Body of pancreas (tissue), 4 donors: ENCODE measurements at regions of chr17 and their contacts with region 1.

Region 1: GRCh38 chr17:4913994-4914393 is 11.1 kb upstream of the CHRNE start:
- DNase-seq: no peak
- ATAC-seq: peak; percentile 16
- H3K4me3 ChIP-seq: no peak overlapping the region
- H3K27ac ChIP-seq: peak overlapping the region in 2 of 4 donors; percentile 9 to 44
- H3K4me1 ChIP-seq: peaks cover 7% of the 10 kb centered on the region
- H3K27me3 ChIP-seq: no peaks in the 10 kb centered on the region
- CTCF ChIP-seq: peak in 1 of 7 experiments; percentile 4
- POLR2A ChIP-seq: no peak

Region 2: DNA sequence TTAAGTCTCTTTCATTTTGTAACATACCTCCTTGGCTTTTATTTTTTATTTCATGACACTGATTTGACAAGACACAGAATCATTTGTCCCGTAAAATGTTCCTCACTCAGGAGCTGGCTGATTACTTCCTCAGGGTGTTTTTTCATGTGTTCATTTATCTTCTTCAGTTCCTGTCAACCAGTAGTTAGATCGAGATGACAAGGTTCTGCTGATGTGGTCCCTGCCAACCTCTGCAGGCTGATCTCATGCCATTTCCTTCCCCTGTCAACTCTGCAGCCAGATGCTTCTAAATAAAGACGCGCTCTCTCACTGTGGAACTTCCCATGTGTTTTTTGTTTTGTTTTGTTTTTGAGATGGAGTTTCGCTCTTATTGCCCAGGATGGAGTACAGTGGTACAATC is 166.1 kb before region 1 on chr17:
- intact Hi-C with region 1: no loop called
- DNase-seq: peak in 1 of 4 donors; percentile 57
- ATAC-seq: no peak
- H3K4me3 ChIP-seq: no peak overlapping the region
- H3K27ac ChIP-seq: peak overlapping the region in 1 of 4 donors; percentile 16
- H3K4me1 ChIP-seq: peaks cover 6% of the 10 kb centered on the region
- H3K27me3 ChIP-seq: peaks cover 0 to 23% of the 10 kb centered on the region in 2 donors
- CTCF ChIP-seq: no peak
- POLR2A ChIP-seq: no peak

Region 3: DNA sequence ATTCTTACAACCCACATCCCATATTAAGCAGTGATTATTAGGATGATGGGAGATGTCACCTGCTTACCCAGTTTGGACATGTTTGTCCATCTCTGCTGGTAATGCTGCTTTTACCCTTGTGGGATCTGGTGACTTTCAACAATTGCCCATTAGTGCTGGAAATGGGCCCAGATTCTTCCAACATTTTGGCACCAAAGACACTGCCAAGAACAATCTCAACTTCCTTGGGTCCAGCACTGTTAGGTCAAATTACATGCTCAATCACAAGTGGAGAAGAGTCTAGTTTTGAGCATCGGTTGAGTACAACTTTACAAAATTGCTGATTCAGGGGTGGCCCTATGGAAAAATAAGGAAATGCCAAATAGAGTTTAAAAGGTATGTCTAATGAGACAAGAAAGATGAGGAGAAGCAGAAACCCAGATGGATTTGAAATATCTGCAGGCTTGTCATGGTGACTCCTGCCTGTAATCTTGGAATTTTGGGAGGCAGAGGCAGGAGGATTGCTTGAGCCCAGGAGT is 151.3 kb after region 1 on chr17:
- intact Hi-C with region 1: loop called (anchors 10 kb)
- DNase-seq: no peak
- ATAC-seq: no peak
- H3K4me3 ChIP-seq: no peak overlapping the region
- H3K27ac ChIP-seq: no peak overlapping the region
- H3K4me1 ChIP-seq: no peaks in the 10 kb centered on the region
- H3K27me3 ChIP-seq: no peaks in the 10 kb centered on the region
- CTCF ChIP-seq: no peak
- POLR2A ChIP-seq: no peak